Sigmoid colon (tissue), 7 donors: ENCODE measurements at regions of chr22 and their contacts with region 1.

Region 1: GRCh38 chr22:36350751-36351594 is 36.8 kb downstream of the MYH9 start:
- DNase-seq: no peak
- H3K4me3 ChIP-seq: peak overlapping the region in 2 of 4 donors; percentile 0 to 5
- H3K27ac ChIP-seq: peak overlapping the region; percentile 98 to 100 (median 100)
- H3K4me1 ChIP-seq: peaks cover 0 to 96% (median 93%) of the 10 kb centered on the region in 4 donors
- H3K27me3 ChIP-seq: no peaks in the 10 kb centered on the region
- CTCF ChIP-seq: no peak
- EP300 ChIP-seq: no peak
- POLR2A ChIP-seq: no peak

Region 2: GRCh38 chr22:36369922-36370791 is 19.2 kb after region 1 on chr22:
- intact Hi-C with region 1: loop called (anchors 2 kb)
- DNase-seq: peak; percentile 86
- H3K4me3 ChIP-seq: peak overlapping the region in 3 of 4 donors; percentile 19 to 23 (median 21)
- H3K27ac ChIP-seq: peak overlapping the region; percentile 98 to 100 (median 100)
- H3K4me1 ChIP-seq: peaks cover 3 to 100% (median 100%) of the 10 kb centered on the region in 4 donors
- H3K27me3 ChIP-seq: no peaks in the 10 kb centered on the region
- CTCF ChIP-seq: no peak
- EP300 ChIP-seq: no peak
- POLR2A ChIP-seq: peak in 1 of 2 donors; percentile 19

Region 3: GRCh38 chr22:36587289-36588154 is 236.5 kb after region 1 on chr22:
- intact Hi-C with region 1: no loop called
- DNase-seq: no peak
- H3K4me3 ChIP-seq: peak overlapping the region in 1 of 4 donors; percentile 21
- H3K27ac ChIP-seq: no peak overlapping the region
- H3K4me1 ChIP-seq: no peaks in the 10 kb centered on the region
- H3K27me3 ChIP-seq: peaks cover 0 to 19% (median 0%) of the 10 kb centered on the region in 3 donors
- CTCF ChIP-seq: no peak
- EP300 ChIP-seq: no peak
- POLR2A ChIP-seq: no peak